HEK293 (cell line): ENCODE measurements at regions of chr15 and their contacts with region 1.

Region 1: GRCh38 chr15:80418892-80419537 is 14.8 kb downstream of the ARNT2 start:
- H3K4me3 ChIP-seq: no peak overlapping the region
- H3K27ac ChIP-seq: no peak overlapping the region
- H3K4me1 ChIP-seq: no peaks in the 10 kb centered on the region
- CTCF ChIP-seq: peak; percentile 27; the same call in 1 of the 2 replicates

Region 2: GRCh38 chr15:80404057-80404715 is 14.8 kb before region 1 on chr15 and contains the start of gene ARNT2:
- CTCF ChIA-PET with region 1: interaction called, 19 read pairs
- POLR2A ChIA-PET with region 1: no interaction called
- H3K4me3 ChIP-seq: peak within 1 kb of the TSS; percentile 62
- H3K27ac ChIP-seq: peak within 1 kb of the TSS; percentile 91
- H3K4me1 ChIP-seq: peaks cover 9% of the 10 kb centered on the region
- CTCF ChIP-seq: no peak

Region 3: DNA sequence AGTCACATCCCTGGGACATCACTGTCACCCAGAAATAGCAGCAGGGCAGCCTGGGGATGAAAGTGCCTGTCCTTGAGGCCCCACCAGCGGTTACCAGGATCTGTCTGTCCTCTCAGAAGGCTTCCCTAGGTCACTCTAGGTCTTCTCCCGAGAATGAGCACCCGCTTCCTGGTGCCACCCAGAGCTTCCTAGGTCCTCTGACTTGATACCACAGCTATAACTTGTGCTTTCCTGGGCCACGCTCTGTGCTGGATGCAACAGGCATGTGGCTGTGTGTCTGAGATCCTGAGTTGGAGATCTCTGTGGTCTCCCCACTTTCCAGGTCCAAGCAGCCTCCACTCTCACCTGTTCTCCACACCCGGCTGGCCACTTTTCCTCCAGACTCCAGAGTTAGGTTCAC is 10.9 kb after region 1 on chr15:
- CTCF ChIA-PET with region 1: interaction called, 25 read pairs
- POLR2A ChIA-PET with region 1: no interaction called
- H3K4me3 ChIP-seq: no peak overlapping the region
- H3K27ac ChIP-seq: no peak overlapping the region
- H3K4me1 ChIP-seq: no peaks in the 10 kb centered on the region; the same call in 1 of the 2 replicates
- CTCF ChIP-seq: no peak

Region 4: DNA sequence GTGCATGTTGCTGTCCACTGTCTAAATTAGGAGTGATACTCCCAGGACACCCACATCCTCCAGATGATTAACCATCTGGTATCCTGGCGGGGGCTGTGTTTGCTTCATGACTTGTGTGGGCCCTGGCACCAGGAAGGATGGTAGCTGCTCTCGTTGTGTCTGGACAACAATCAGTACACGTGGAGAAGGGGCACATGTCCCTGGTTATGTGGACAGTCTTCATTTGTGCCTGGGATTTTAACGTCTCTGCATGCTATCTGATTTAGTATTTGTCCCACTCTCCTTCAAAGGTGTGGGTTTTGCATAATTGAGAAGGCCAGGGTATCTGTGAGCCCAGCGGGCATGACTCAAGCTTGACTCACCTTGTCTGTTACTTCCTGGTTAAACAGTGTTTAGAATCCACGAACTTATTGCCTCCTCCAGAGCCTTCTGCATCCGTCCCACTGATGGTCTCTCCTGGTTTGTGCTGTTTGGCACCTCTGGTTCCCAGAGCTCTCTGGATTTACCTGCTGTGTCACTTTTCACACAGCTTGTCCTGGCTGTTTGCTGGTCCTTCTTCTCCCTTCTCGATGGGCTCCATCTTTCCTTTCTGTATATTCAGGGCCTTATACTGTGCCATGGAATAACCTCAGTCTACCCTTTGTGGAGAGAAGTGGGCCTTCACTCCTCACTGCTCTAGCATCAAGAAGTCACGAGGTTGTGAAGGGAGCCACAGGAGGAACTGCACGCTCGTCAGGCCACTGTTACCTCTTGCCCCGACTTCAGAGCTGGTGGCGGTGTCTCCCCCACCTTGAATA is 17.7 kb after region 1 on chr15:
- CTCF ChIA-PET with region 1: interaction called, 13 read pairs
- POLR2A ChIA-PET with region 1: no interaction called
- H3K4me3 ChIP-seq: no peak overlapping the region
- H3K27ac ChIP-seq: no peak overlapping the region
- H3K4me1 ChIP-seq: no peaks in the 10 kb centered on the region
- CTCF ChIP-seq: no peak